ENCODE measurements at regions of chr11 and their contacts with region 1.

Region 1: DNA sequence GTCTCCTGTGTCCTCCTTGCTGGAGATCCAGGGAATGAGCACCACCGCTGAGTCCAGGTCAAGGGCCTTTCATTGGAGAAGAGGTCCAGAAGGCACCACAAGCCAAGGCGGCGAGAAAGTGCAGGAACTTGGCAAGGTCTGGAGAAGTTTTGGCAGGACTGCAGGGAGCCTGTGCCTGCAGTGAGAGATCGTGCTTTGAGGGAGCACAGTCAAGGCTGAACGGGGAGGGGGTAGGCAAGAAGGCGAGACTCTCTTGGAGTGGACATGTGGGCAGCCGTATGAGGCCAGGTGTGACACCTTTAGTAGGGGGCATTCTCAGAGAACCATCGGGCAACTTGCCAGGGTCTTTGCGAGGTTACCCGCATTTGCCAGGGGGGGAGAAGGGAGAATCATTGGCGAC is 30.5 kb downstream of the LRRC10B start:
- DNase-seq: no peak
- ATAC-seq: peak in 3 of 4 donors; percentile 14 to 24 (median 23)
- H3K4me3 ChIP-seq: no peak overlapping the region
- H3K27ac ChIP-seq: no peak overlapping the region
- H3K4me1 ChIP-seq: peaks cover 0 to 49% (median 19%) of the 10 kb centered on the region in 12 donors
- H3K27me3 ChIP-seq: no peaks in the 10 kb centered on the region
- CTCF ChIP-seq: no peak
- POLR2A ChIP-seq: no peak

Region 2: GRCh38 chr11:61574611-61575010 is 35.6 kb after region 1 on chr11:
- intact Hi-C with region 1: loop called in 3 of 10 experiments (anchors 2 to 5 kb)
- DNase-seq: no peak
- ATAC-seq: no peak
- H3K4me3 ChIP-seq: no peak overlapping the region
- H3K27ac ChIP-seq: no peak overlapping the region
- H3K4me1 ChIP-seq: peaks cover 0 to 60% (median 10%) of the 10 kb centered on the region in 12 donors
- H3K27me3 ChIP-seq: peaks cover 0 to 10% (median 0%) of the 10 kb centered on the region in 9 donors
- CTCF ChIP-seq: no peak
- POLR2A ChIP-seq: no peak

Region 3: GRCh38 chr11:62256281-62256680 is 717.3 kb after region 1 on chr11:
- intact Hi-C with region 1: no loop called
- DNase-seq: no peak
- ATAC-seq: no peak
- H3K4me3 ChIP-seq: no peak overlapping the region
- H3K27ac ChIP-seq: no peak overlapping the region
- H3K4me1 ChIP-seq: no peaks in the 10 kb centered on the region
- H3K27me3 ChIP-seq: peaks cover 0 to 14% (median 0%) of the 10 kb centered on the region in 9 donors
- CTCF ChIP-seq: no peak
- POLR2A ChIP-seq: no peak